Breast epithelium (tissue), 4 donors: ENCODE measurements at regions of chr1 and their contacts with region 1.

Region 1: GRCh38 chr1:8939362-8939995 is 6.2 kb upstream of the CA6 start:
- DNase-seq: no peak
- H3K4me3 ChIP-seq: no peak overlapping the region
- H3K27ac ChIP-seq: no peak overlapping the region
- H3K4me1 ChIP-seq: peaks cover 0 to 8% of the 10 kb centered on the region in 2 donors
- H3K27me3 ChIP-seq: no peaks in the 10 kb centered on the region
- CTCF ChIP-seq: no peak
- POLR2A ChIP-seq: no peak

Region 2: DNA sequence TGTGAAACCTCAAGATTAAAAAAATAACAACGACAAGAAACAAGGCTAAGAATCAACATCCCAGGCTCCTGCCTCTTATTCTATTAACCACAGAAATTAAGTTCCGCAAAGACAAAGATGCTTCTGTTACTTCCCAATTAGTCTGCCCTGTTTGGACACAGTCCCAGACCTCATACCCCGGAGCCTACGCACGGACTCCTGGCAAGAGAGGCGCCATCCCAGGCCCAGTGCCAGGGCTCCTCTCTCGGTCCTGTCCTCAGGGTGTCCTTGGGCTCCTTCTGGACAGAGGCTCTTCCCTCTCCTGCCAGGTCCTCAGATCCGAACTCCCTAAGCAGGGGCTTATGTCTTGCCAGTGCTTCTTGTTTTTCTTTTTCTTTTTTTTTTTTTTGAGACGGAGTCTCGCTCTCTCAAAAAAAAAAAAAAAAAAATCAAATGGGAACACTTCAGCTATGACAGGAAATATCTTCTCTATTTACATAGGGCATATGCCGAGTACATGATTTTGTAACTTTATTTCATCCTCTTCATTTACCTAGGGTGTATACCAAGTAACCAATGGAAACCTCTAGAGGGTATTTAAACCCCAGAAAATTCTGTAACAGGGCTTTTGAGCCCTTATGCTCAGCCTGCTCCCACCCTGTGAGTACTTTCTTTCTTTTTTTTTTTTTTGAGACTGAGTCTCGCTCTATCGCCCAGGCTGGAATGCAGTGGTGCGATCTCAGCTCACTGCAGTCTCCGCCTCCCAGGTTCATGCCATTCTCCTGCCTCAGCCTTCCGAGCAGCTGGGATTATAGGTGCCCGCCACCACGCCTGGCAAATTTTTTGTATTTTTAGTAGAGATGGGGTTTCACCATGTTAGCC is 49.3 kb before region 1 on chr1:
- intact Hi-C with region 1: no loop called
- DNase-seq: peak; percentile 95 to 98
- H3K4me3 ChIP-seq: peak overlapping the region in 1 of 3 donors; percentile 23
- H3K27ac ChIP-seq: peak overlapping the region; percentile 67 to 87
- H3K4me1 ChIP-seq: peaks cover 0 to 5% of the 10 kb centered on the region in 2 donors
- H3K27me3 ChIP-seq: no peaks in the 10 kb centered on the region
- CTCF ChIP-seq: no peak
- POLR2A ChIP-seq: no peak

Region 3: GRCh38 chr1:9770298-9770697 is 830.8 kb after region 1 on chr1:
- intact Hi-C with region 1: loop called (anchors 10 kb)
- DNase-seq: no peak
- H3K4me3 ChIP-seq: no peak overlapping the region
- H3K27ac ChIP-seq: no peak overlapping the region
- H3K4me1 ChIP-seq: no peaks in the 10 kb centered on the region
- H3K27me3 ChIP-seq: no peaks in the 10 kb centered on the region
- CTCF ChIP-seq: no peak
- POLR2A ChIP-seq: no peak